SK-N-SH (cell line): ENCODE measurements at regions of chr7 and their contacts with region 1.

Region 1: GRCh38 chr7:150404805-150405583 is 25.9 kb downstream of the ZNF775 start:
- DNase-seq: peak; percentile 100
- H3K4me3 ChIP-seq: peak overlapping the region; percentile 71 to 74
- H3K27ac ChIP-seq: peak overlapping the region; percentile 56 to 87
- H3K4me1 ChIP-seq: peaks cover 9 to 35% of the 10 kb centered on the region in 2 experiments
- H3K27me3 ChIP-seq: no peaks in the 10 kb centered on the region
- CTCF ChIP-seq: peak; percentile 42
- EP300 ChIP-seq: peak in 1 of 2 experiments; percentile 74; a peak in 2 of 4 replicates
- RAD21 ChIP-seq: peak; percentile 19; the same call in 1 of the 2 replicates

Region 2: GRCh38 chr7:150307904-150308303 is 97.1 kb before region 1 on chr7:
- CTCF ChIA-PET with region 1: no interaction called
- POLR2A ChIA-PET with region 1: no interaction called
- DNase-seq: no peak
- H3K4me3 ChIP-seq: no peak overlapping the region
- H3K27ac ChIP-seq: no peak overlapping the region
- H3K4me1 ChIP-seq: no peaks in the 10 kb centered on the region
- H3K27me3 ChIP-seq: no peaks in the 10 kb centered on the region; the same call in 1 of the 2 replicates
- CTCF ChIP-seq: no peak
- EP300 ChIP-seq: no peak
- RAD21 ChIP-seq: no peak

Region 3: DNA sequence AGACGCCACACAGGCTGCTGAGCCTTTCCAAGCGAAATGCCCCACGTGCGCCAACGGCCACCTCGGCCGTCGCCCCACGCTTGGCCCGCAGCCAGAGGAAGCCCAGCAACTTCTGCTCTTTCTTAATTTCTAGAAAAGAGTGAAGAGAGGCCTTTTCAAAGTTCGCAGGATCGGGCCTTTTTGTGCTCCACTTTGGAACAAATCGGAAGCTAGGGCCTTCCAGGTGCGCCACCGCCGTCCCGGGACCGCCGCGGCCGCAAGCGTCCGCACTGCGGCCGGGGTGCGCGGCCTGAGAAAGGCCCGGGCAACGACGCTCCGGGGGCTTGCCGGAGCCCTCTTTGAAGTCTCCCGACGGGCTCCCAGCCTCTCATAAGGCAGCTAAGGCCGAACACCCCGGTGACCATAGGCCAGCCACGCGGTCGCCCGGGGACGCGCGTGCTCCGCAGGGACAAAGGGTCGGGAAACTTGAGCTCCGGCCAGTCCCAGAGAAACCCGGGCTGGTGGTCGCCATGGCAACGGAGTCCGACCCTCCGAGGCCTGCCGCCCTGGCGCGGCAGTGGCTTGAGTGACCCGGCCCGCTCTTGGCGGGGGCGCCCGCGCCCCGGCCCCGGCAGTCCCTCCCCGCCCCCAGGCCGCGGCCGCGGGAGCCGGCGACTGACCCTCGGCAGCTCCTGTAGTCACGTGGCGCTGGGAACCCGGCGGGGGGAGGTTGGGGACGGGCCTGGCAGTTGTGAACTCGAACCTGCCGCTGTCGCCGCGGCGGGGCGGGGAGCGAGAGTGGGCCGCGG is 36.7 kb before region 1 on chr7 and contains the start of gene REPIN1:
- CTCF ChIA-PET with region 1: interaction called, 17 read pairs
- POLR2A ChIA-PET with region 1: interaction called, 19 read pairs
- DNase-seq: peak; percentile 99
- H3K4me3 ChIP-seq: peak within 1 kb of the TSS; percentile 70 to 77
- H3K27ac ChIP-seq: peak within 1 kb of the TSS; percentile 72 to 96
- H3K4me1 ChIP-seq: peaks cover 19 to 32% of the 10 kb centered on the region in 2 experiments
- H3K27me3 ChIP-seq: no peaks in the 10 kb centered on the region
- CTCF ChIP-seq: no peak
- EP300 ChIP-seq: peak in 1 of 2 experiments; percentile 57; a peak in 3 of 4 replicates
- RAD21 ChIP-seq: peak; percentile 4; the same call in 1 of the 2 replicates
- polyA plus RNA-seq, gene REPIN1: 87.5 and 91.6 TPM in 2 replicates

Region 4: GRCh38 chr7:150420987-150421674 is 16.1 kb after region 1 on chr7:
- CTCF ChIA-PET with region 1: interaction called, 19 read pairs
- POLR2A ChIA-PET with region 1: no interaction called
- DNase-seq: peak; percentile 92
- H3K4me3 ChIP-seq: peak overlapping the region in 1 of 2 experiments; percentile 33; a peak in 1 of 4 replicates
- H3K27ac ChIP-seq: no peak overlapping the region
- H3K4me1 ChIP-seq: no peaks in the 10 kb centered on the region
- H3K27me3 ChIP-seq: no peaks in the 10 kb centered on the region
- CTCF ChIP-seq: peak; percentile 99
- EP300 ChIP-seq: no peak
- RAD21 ChIP-seq: peak; percentile 95

Region 5: GRCh38 chr7:150439967-150440366 is 35.0 kb after region 1 on chr7:
- CTCF ChIA-PET with region 1: no interaction called
- POLR2A ChIA-PET with region 1: no interaction called
- DNase-seq: no peak
- H3K4me3 ChIP-seq: no peak overlapping the region
- H3K27ac ChIP-seq: no peak overlapping the region
- H3K4me1 ChIP-seq: no peaks in the 10 kb centered on the region
- H3K27me3 ChIP-seq: no peaks in the 10 kb centered on the region; the same call in 1 of the 2 replicates
- CTCF ChIP-seq: no peak
- EP300 ChIP-seq: no peak
- RAD21 ChIP-seq: no peak

Region 6: GRCh38 chr7:150514748-150515222 is 109.8 kb after region 1 on chr7 and contains the start of gene GIMAP7:
- CTCF ChIA-PET with region 1: no interaction called
- POLR2A ChIA-PET with region 1: no interaction called
- DNase-seq: no peak
- H3K4me3 ChIP-seq: no peak within 1 kb of the TSS
- H3K27ac ChIP-seq: no peak within 1 kb of the TSS
- H3K4me1 ChIP-seq: no peaks in the 10 kb centered on the region
- H3K27me3 ChIP-seq: peaks cover 17% of the 10 kb centered on the region; the same call in 1 of the 2 replicates
- CTCF ChIP-seq: no peak
- EP300 ChIP-seq: no peak
- RAD21 ChIP-seq: no peak
- polyA plus RNA-seq, gene GIMAP7: not detected in 2 replicates

Region 7: GRCh38 chr7:150648353-150649079 is 243.5 kb after region 1 on chr7:
- CTCF ChIA-PET with region 1: no interaction called
- POLR2A ChIA-PET with region 1: no interaction called
- DNase-seq: no peak
- H3K4me3 ChIP-seq: no peak overlapping the region
- H3K27ac ChIP-seq: no peak overlapping the region
- H3K4me1 ChIP-seq: no peaks in the 10 kb centered on the region
- H3K27me3 ChIP-seq: no peaks in the 10 kb centered on the region
- CTCF ChIP-seq: no peak
- EP300 ChIP-seq: no peak
- RAD21 ChIP-seq: no peak